Activated naive CD4-positive, alpha-beta T cell treated with anti-CD3 and anti-CD28 coated beads, Interleukin-2, amount 10 ng/mL, durations not matched to agents 7 days and 5 days (primary cell): ENCODE measurements at regions of chr9 and their contacts with region 1.

Region 1: GRCh38 chr9:123349691-123350480 is 6.1 kb upstream of the CRB2 start:
- DNase-seq: peak; percentile 77
- H3K4me3 Mint-ChIP-seq: no peak overlapping the region
- H3K27ac Mint-ChIP-seq: no peak overlapping the region
- H3K4me1 Mint-ChIP-seq: no peaks in the 10 kb centered on the region
- H3K27me3 Mint-ChIP-seq: peaks cover 35% of the 10 kb centered on the region

Region 2: DNA sequence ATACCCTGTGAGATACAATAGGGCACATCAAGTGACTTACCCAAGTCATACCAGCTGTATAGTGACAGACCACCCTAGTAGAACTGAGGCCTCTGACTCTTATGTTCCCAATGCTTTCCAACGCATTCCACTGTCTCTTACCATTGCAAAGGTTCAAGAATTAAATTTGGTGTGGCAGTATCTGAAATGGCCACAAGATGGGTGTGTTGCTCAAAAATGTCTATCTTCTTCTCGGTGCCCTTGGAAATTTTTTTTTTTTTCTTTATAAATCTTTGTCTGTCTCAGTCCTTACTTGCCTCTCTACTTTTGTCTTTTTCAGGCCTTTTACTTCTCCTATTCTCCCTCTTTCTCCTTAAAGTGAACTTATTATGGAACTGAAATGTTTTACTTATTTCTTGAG is 268.1 kb before region 1 on chr9:
- CTCF ChIA-PET with region 1: interaction called, 48 read pairs
- DNase-seq: peak; percentile 43
- H3K4me3 Mint-ChIP-seq: no peak overlapping the region
- H3K27ac Mint-ChIP-seq: no peak overlapping the region
- H3K4me1 Mint-ChIP-seq: no peaks in the 10 kb centered on the region
- H3K27me3 Mint-ChIP-seq: no peaks in the 10 kb centered on the region

Region 3: GRCh38 chr9:123102375-123103110 is 247.3 kb before region 1 on chr9:
- CTCF ChIA-PET with region 1: interaction called, 36 read pairs
- DNase-seq: no peak
- H3K4me3 Mint-ChIP-seq: no peak overlapping the region
- H3K27ac Mint-ChIP-seq: no peak overlapping the region
- H3K4me1 Mint-ChIP-seq: no peaks in the 10 kb centered on the region
- H3K27me3 Mint-ChIP-seq: no peaks in the 10 kb centered on the region

Region 4: DNA sequence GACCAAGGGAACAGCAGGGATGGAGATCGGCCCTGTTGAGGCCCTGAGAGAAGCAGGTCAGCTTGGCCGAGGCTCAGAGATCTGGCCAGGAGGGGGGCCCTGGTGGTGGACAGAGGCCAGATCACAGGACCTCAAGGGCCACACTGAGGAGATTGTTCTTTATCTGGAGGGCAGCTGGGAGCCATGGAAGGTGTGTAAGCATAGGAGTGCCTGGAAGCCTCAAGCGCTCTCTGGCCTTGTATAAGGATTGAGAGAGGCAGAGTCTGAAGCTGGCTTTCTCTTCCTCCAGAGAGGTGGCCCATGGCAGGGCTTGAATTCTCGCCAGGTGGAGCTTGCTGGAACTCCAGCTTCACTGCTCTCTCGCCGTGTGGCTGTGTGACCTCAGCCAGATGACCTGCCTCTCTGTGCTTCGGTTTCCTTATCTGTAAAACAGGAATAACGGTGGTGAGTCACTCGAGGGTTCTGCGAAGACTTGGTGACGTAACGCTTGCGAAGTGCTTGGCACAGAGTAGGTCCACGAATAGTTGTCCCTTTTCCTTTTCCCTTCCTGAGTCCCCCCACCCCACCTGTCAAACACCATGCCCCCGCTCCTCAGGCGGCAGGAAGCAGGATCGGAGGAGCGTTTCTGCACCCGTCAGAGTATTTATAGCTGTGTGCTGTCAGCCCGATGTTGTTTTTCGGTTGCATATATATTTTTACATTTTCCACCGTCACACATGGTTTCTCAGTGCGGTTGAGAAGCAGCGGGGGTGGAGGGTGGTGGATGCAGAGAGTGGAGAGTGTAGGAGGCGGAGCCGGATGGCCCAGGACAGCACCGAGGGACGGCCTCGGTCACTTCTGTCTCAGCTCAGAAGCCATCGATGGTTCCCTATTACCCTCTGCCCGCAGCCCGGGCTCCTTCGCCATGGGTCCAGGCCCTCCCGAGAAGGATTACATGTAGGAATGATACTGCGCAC is 10.9 kb before region 1 on chr9:
- CTCF ChIA-PET with region 1: interaction called, 16 read pairs
- DNase-seq: peak; percentile 75
- H3K4me3 Mint-ChIP-seq: peak overlapping the region; percentile 50
- H3K27ac Mint-ChIP-seq: peak overlapping the region; percentile 91
- H3K4me1 Mint-ChIP-seq: peaks cover 44% of the 10 kb centered on the region
- H3K27me3 Mint-ChIP-seq: peaks cover 9% of the 10 kb centered on the region

Region 5: GRCh38 chr9:123383512-123384170 is 33.8 kb after region 1 on chr9:
- CTCF ChIA-PET with region 1: interaction called, 75 read pairs
- DNase-seq: no peak
- H3K4me3 Mint-ChIP-seq: no peak overlapping the region
- H3K27ac Mint-ChIP-seq: no peak overlapping the region
- H3K4me1 Mint-ChIP-seq: no peaks in the 10 kb centered on the region
- H3K27me3 Mint-ChIP-seq: no peaks in the 10 kb centered on the region

Region 6: GRCh38 chr9:123389070-123389469 is 39.2 kb after region 1 on chr9:
- CTCF ChIA-PET with region 1: interaction called, 75 read pairs
- DNase-seq: no peak
- H3K4me3 Mint-ChIP-seq: no peak overlapping the region
- H3K27ac Mint-ChIP-seq: no peak overlapping the region
- H3K4me1 Mint-ChIP-seq: no peaks in the 10 kb centered on the region
- H3K27me3 Mint-ChIP-seq: no peaks in the 10 kb centered on the region

Region 7: GRCh38 chr9:123548741-123549545 is 199.1 kb after region 1 on chr9:
- CTCF ChIA-PET with region 1: no interaction called
- DNase-seq: no peak
- H3K4me3 Mint-ChIP-seq: no peak overlapping the region
- H3K27ac Mint-ChIP-seq: no peak overlapping the region
- H3K4me1 Mint-ChIP-seq: no peaks in the 10 kb centered on the region
- H3K27me3 Mint-ChIP-seq: no peaks in the 10 kb centered on the region